H1 (cell line): ENCODE measurements at regions of chr15 and their contacts with region 1.

Region 1: DNA sequence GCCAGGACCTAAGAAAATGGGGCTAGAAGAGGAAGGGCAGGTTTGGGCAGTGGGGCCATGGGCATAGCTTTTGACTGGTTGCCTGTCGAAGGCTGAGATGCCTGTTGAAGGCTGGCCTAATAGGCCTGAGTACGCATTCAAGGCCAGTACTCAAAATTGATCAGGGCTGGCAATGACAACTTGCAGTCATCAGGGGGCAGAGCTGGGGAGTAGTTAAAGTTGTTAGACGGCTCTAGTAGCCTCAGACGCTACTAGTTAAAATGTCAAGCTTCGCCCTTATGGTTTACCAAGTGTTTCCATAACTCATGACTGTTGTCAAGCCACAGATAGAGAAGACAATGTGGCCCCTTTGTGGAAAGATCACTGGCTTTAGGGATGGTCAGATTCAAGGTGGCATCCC is 28.7 kb downstream of the SPG21 start:
- DNase-seq: no peak
- H3K4me3 ChIP-seq: no peak overlapping the region
- H3K27ac ChIP-seq: no peak overlapping the region
- H3K4me1 ChIP-seq: no peaks in the 10 kb centered on the region
- H3K27me3 ChIP-seq: no peaks in the 10 kb centered on the region
- CTCF ChIP-seq: peak; percentile 41 to 61 (median 55)
- EP300 ChIP-seq: no peak
- POLR2A ChIP-seq: no peak
- RAD21 ChIP-seq: peak; percentile 30 to 50; a peak in 3 of 4 replicates

Region 2: GRCh38 chr15:64702816-64703646 is 258.0 kb before region 1 on chr15:
- CTCF ChIA-PET with region 1: no interaction called
- POLR2A ChIA-PET with region 1: no interaction called
- DNase-seq: peak; percentile 86 to 100
- H3K4me3 ChIP-seq: peak overlapping the region; percentile 70 to 88 (median 85)
- H3K27ac ChIP-seq: peak overlapping the region; percentile 82
- H3K4me1 ChIP-seq: peaks cover 12 to 23% (median 17%) of the 10 kb centered on the region in 4 experiments
- H3K27me3 ChIP-seq: no peaks in the 10 kb centered on the region
- CTCF ChIP-seq: no peak
- EP300 ChIP-seq: peak in 1 of 2 experiments; percentile 51; a peak in 1 of 3 replicates
- POLR2A ChIP-seq: peak; percentile 69 to 90
- RAD21 ChIP-seq: no peak; a peak in 1 of 4 replicates

Region 3: GRCh38 chr15:64942321-64942720 is 18.7 kb before region 1 on chr15:
- CTCF ChIA-PET with region 1: interaction called, 10 read pairs
- POLR2A ChIA-PET with region 1: interaction called, 4 read pairs
- DNase-seq: peak in 1 of 2 experiments; percentile 41
- H3K4me3 ChIP-seq: no peak overlapping the region
- H3K27ac ChIP-seq: no peak overlapping the region
- H3K4me1 ChIP-seq: no peaks in the 10 kb centered on the region
- H3K27me3 ChIP-seq: no peaks in the 10 kb centered on the region
- CTCF ChIP-seq: no peak
- EP300 ChIP-seq: no peak
- POLR2A ChIP-seq: no peak
- RAD21 ChIP-seq: no peak

Region 4: DNA sequence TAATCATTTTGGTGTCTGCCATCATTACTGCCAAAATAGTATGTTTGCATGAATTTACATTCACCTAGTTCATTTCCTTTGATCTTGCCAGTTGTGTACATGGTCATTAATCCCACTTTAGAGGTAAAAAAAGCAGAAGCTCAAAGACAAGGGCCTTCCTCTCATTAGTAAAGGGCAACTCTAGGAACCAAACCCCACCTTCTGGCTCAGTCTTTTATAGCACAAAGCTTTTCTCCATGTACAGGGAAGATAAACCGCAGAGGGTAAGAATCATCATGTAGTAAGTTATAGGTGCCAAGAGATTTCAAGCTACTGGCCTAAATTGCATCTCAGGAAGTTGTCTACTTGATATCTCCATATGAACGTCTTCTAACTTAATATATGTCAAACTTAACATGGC is 48.0 kb after region 1 on chr15:
- CTCF ChIA-PET with region 1: interaction called, 15 read pairs
- POLR2A ChIA-PET with region 1: no interaction called
- DNase-seq: no peak
- H3K4me3 ChIP-seq: no peak overlapping the region
- H3K27ac ChIP-seq: no peak overlapping the region
- H3K4me1 ChIP-seq: 0 out of 7 replicates have a peak, but pooled peaks cover 0 to 3% (median 0%) of the 10 kb centered on the region in 4 experiments
- H3K27me3 ChIP-seq: no peaks in the 10 kb centered on the region
- CTCF ChIP-seq: peak in 2 of 3 experiments; percentile 29 to 39; a peak in 2 of 4 replicates
- EP300 ChIP-seq: no peak
- POLR2A ChIP-seq: no peak
- RAD21 ChIP-seq: peak; percentile 41 to 55

Region 5: GRCh38 chr15:65028921-65029735 is 68.1 kb after region 1 on chr15 and contains the start of gene MTFMT:
- CTCF ChIA-PET with region 1: no interaction called
- POLR2A ChIA-PET with region 1: no interaction called
- DNase-seq: peak in 1 of 2 experiments; percentile 98
- H3K4me3 ChIP-seq: peak within 1 kb of the TSS; percentile 75 to 93 (median 88)
- H3K27ac ChIP-seq: no peak within 1 kb of the TSS; the same call in 1 of the 2 replicates
- H3K4me1 ChIP-seq: peaks cover 0 to 2% (median 0%) of the 10 kb centered on the region in 4 experiments; a peak in 1 of 7 replicates
- H3K27me3 ChIP-seq: no peaks in the 10 kb centered on the region
- CTCF ChIP-seq: no peak; a peak in 1 of 4 replicates
- EP300 ChIP-seq: no peak
- POLR2A ChIP-seq: peak; percentile 89 to 90
- RAD21 ChIP-seq: no peak; a peak in 1 of 4 replicates
- total RNA-seq, gene MTFMT: 16.5 and 20.8 TPM in 2 replicates